Activated naive CD8-positive, alpha-beta T cell treated with anti-CD3 and anti-CD28 coated beads, Interleukin-2, amount 10 ng/mL, durations not matched to agents 7 days and 5 days (primary cell): ENCODE measurements at regions of chr2 and their contacts with region 1.

Region 1: GRCh38 chr2:71226965-71227560 is at the start of gene PAIP2B:
- DNase-seq: peak; percentile 94
- ATAC-seq: peak; percentile 97
- H3K4me3 Mint-ChIP-seq: peak within 1 kb of the TSS; percentile 96
- H3K27ac Mint-ChIP-seq: peak within 1 kb of the TSS; percentile 90
- H3K4me1 Mint-ChIP-seq: peaks cover 16% of the 10 kb centered on the region
- H3K27me3 Mint-ChIP-seq: peaks cover 13% of the 10 kb centered on the region
- total RNA-seq, gene PAIP2B: 4.2 to 4.8 TPM

Region 2: DNA sequence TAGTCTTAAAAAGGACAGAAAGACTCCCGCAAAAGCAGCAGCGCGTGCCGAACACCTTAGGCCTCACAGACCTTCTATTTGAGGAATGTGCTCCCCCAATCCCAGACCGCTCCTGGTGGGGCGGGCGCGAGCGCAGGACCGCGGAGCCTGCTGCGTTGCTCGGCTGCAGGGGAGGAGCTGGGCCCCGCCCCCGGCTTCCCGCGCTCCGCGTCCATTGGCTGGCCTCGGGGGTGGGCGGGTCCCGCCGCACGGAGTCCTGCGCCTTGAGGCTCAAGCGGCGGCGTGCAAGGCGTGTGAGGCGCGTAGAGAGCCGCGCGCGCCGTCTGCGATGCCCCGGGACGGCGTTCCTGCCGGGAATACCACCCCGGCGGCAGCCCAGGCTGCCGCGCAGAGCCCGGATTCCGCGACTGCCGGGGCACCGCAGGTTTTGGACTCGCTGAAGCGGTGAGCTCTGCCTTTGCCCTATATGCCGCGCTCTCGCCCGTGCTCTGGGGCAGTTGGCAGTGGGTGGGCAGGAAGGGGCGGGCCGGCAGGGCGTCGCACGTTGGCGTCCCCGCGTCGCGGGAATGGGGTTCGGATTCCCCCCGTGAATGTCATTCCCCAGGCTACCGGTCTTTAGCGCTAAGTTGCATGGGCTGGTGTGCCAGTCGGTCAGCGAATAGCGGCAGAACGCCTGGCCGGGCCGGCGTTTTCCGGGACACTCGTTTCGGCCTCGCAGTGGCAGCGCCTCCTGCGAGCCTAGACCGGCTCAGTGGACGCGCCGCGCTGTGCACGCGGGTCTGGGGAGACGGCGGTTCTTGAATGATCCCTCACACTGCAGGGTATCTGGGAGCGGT is 49.5 kb after region 1 on chr2:
- POLR2A ChIA-PET with region 1: interaction called, 12 read pairs
- DNase-seq: peak; percentile 95
- ATAC-seq: peak; percentile 100
- H3K4me3 Mint-ChIP-seq: peak overlapping the region; percentile 66
- H3K27ac Mint-ChIP-seq: no peak overlapping the region
- H3K4me1 Mint-ChIP-seq: peaks cover 8% of the 10 kb centered on the region
- H3K27me3 Mint-ChIP-seq: peaks cover 79% of the 10 kb centered on the region